CD4-positive, alpha-beta memory T cell (primary cell): ENCODE measurements at regions of chr10 and their contacts with region 1.

Region 1: GRCh38 chr10:62437696-62438095 is 63.5 kb downstream of the ZNF365 start:
- DNase-seq: peak; percentile 40 to 66 (median 62)
- H3K4me3 ChIP-seq: no peak overlapping the region
- H3K4me3 Mint-ChIP-seq: no peak overlapping the region
- H3K27ac ChIP-seq: no peak overlapping the region
- H3K27ac Mint-ChIP-seq: no peak overlapping the region
- H3K4me1 ChIP-seq: no peaks in the 10 kb centered on the region
- H3K4me1 Mint-ChIP-seq: peaks cover 0 to 5% (median 0%) of the 10 kb centered on the region in 4 donors
- H3K27me3 ChIP-seq: no peaks in the 10 kb centered on the region
- H3K27me3 Mint-ChIP-seq: no peaks in the 10 kb centered on the region

Region 2: DNA sequence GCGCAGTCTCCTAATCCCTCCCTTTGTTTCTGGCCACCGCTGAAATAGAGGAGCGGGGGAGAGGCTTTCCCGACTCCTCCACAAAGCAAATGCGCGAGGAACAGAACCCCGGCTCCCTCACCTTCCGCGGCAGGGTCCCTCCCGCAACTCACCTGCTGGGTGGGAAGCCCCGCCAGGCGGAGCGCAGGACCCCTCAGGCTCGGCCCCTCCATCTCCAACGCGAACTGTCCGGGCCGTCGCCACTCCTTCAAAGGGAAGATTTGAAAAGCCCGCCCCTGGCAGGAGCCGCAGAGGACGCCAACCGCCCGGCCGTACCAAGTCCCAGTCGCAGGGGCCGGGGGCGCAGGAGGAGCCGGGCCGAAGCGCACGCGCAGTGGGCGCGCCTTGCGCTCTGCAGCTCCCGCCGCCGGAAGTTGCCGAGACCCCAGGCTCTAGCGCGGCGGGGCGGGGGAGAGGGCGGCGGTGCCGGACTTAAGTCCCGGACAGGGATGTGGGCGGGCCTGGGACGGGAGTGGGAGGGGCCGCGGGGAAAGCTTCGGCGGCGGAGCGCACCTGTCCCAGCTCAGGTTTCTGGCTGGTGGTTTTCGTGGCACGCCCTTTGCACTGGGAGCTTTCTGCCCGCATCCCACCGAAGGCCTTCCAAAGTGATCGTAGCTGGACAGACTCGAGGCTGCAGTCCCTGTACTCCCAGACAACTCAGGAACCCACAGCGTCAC is 169.1 kb before region 1 on chr10 and contains the start of gene RTKN2:
- CTCF ChIA-PET with region 1: interaction called, 27 read pairs
- POLR2A ChIA-PET with region 1: no interaction called
- intact Hi-C with region 1: loop called (anchors 1 kb)
- DNase-seq: peak; percentile 69 to 75 (median 74)
- H3K4me3 ChIP-seq: peak within 1 kb of the TSS; percentile 34 to 73
- H3K4me3 Mint-ChIP-seq: peak within 1 kb of the TSS; percentile 83 to 94 (median 88)
- H3K27ac ChIP-seq: no peak within 1 kb of the TSS
- H3K27ac Mint-ChIP-seq: peak within 1 kb of the TSS; percentile 16 to 84 (median 48)
- H3K4me1 ChIP-seq: peaks cover 16% of the 10 kb centered on the region
- H3K4me1 Mint-ChIP-seq: peaks cover 6 to 21% (median 12%) of the 10 kb centered on the region in 4 donors
- H3K27me3 ChIP-seq: peaks cover 10% of the 10 kb centered on the region
- H3K27me3 Mint-ChIP-seq: peaks cover 3 to 4% of the 10 kb centered on the region in 2 donors
- total RNA-seq, gene RTKN2: 11.0 to 12.2 TPM

Region 3: GRCh38 chr10:62471711-62472110 is 34.0 kb after region 1 on chr10:
- CTCF ChIA-PET with region 1: no interaction called
- POLR2A ChIA-PET with region 1: no interaction called
- intact Hi-C with region 1: no loop called
- DNase-seq: no peak
- H3K4me3 ChIP-seq: no peak overlapping the region
- H3K4me3 Mint-ChIP-seq: no peak overlapping the region
- H3K27ac ChIP-seq: no peak overlapping the region
- H3K27ac Mint-ChIP-seq: no peak overlapping the region
- H3K4me1 ChIP-seq: no peaks in the 10 kb centered on the region
- H3K4me1 Mint-ChIP-seq: no peaks in the 10 kb centered on the region
- H3K27me3 ChIP-seq: no peaks in the 10 kb centered on the region
- H3K27me3 Mint-ChIP-seq: peaks cover 4 to 6% of the 10 kb centered on the region in 2 donors

Region 4: DNA sequence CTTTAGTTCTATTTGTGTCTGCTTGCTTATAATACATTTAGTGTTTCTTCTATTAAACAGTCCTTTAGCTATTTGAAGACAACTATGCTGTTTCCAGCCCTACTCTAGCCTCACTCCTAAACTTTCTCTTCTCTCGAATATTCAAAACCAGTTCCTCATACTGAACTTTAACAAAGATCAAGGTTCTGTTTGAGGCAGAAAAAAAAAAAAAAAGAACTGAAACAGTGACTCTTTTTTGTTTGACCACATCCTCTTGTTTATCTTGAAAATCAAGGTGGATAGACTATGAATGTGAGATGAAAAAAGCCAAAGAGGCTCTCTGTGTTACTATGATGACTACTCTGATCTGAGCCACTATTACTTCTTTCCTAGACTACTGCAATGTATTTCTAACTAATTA is 90.7 kb after region 1 on chr10:
- CTCF ChIA-PET with region 1: interaction called, 3 read pairs
- POLR2A ChIA-PET with region 1: no interaction called
- intact Hi-C with region 1: loop called (anchors 5 kb)
- DNase-seq: peak in 4 of 5 donors; percentile 62 to 77 (median 72)
- H3K4me3 ChIP-seq: no peak overlapping the region
- H3K4me3 Mint-ChIP-seq: peak overlapping the region; percentile 4 to 78 (median 65)
- H3K27ac ChIP-seq: no peak overlapping the region
- H3K27ac Mint-ChIP-seq: peak overlapping the region; percentile 45 to 87 (median 63)
- H3K4me1 ChIP-seq: peaks cover 39% of the 10 kb centered on the region
- H3K4me1 Mint-ChIP-seq: peaks cover 30 to 41% (median 34%) of the 10 kb centered on the region in 4 donors
- H3K27me3 ChIP-seq: no peaks in the 10 kb centered on the region
- H3K27me3 Mint-ChIP-seq: peaks cover 0 to 1% of the 10 kb centered on the region in 2 donors

Region 5: GRCh38 chr10:62610649-62611229 is 173.0 kb after region 1 on chr10:
- CTCF ChIA-PET with region 1: no interaction called
- POLR2A ChIA-PET with region 1: no interaction called
- intact Hi-C with region 1: loop called (anchors 5 kb)
- DNase-seq: peak; percentile 76 to 80 (median 78)
- H3K4me3 ChIP-seq: no peak overlapping the region
- H3K4me3 Mint-ChIP-seq: no peak overlapping the region
- H3K27ac ChIP-seq: no peak overlapping the region
- H3K27ac Mint-ChIP-seq: peak overlapping the region in 2 of 7 donors; percentile 46 to 78
- H3K4me1 ChIP-seq: peaks cover 4% of the 10 kb centered on the region
- H3K4me1 Mint-ChIP-seq: peaks cover 3 to 9% (median 4%) of the 10 kb centered on the region in 4 donors
- H3K27me3 ChIP-seq: no peaks in the 10 kb centered on the region
- H3K27me3 Mint-ChIP-seq: peaks cover 4 to 8% of the 10 kb centered on the region in 2 donors

Region 6: DNA sequence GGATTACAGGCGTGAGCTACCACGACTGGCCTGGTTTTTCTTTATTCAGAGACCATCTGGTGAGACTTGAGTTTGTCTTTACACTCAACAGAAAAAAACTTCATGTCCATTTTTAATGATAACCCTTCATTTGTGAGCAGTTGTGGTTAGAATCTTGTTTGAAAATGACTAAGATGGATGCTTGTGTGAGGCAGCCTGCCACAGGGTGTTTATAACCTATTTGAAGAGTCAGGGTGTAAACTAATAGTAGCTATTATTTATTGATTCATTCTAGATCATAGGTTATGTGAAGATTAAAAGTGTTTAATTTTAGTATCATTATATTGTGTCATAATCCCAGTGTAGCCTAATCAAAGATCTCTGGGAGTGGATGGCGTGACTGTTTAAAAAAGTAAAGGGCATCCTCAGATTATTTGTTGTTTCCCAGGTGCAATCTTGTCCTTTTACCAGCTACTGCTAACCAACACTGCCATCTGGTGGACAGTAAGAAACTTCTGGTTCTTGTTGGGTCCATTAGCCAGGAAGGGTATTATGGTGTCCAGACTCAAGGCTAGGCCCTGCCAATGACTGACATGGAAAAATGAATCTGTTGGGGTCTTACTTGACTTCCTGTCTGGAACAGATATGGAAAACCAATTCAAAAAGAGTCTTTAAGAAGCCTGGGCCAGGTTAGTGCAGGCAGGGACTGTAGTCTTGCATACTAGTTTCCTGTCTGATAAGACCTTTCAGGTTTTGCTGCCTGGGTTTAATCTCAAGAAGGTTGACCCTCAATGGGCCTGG is 720.3 kb after region 1 on chr10:
- CTCF ChIA-PET with region 1: interaction called, 59 read pairs
- POLR2A ChIA-PET with region 1: no interaction called
- intact Hi-C with region 1: loop called (anchors 1 kb)
- DNase-seq: peak; percentile 62 to 66 (median 64)
- H3K4me3 ChIP-seq: no peak overlapping the region
- H3K4me3 Mint-ChIP-seq: no peak overlapping the region
- H3K27ac ChIP-seq: no peak overlapping the region
- H3K27ac Mint-ChIP-seq: peak overlapping the region in 2 of 7 donors; percentile 47
- H3K4me1 ChIP-seq: no peaks in the 10 kb centered on the region
- H3K4me1 Mint-ChIP-seq: peaks cover 7 to 12% (median 9%) of the 10 kb centered on the region in 4 donors
- H3K27me3 ChIP-seq: no peaks in the 10 kb centered on the region
- H3K27me3 Mint-ChIP-seq: no peaks in the 10 kb centered on the region